ENCODE measurements at regions of chr17 and their contacts with region 1.

Region 1: GRCh38 chr17:80035943-80036714 is at the start of gene CCDC40:
- DNase-seq: peak; percentile 93
- ATAC-seq: peak; percentile 87
- H3K4me3 ChIP-seq: peak within 1 kb of the TSS; percentile 43 to 80 (median 71)
- H3K4me3 Mint-ChIP-seq: peak within 1 kb of the TSS; percentile 87
- H3K27ac ChIP-seq: peak within 1 kb of the TSS; percentile 73 to 83
- H3K27ac Mint-ChIP-seq: peak within 1 kb of the TSS; percentile 89
- H3K4me1 ChIP-seq: peaks cover 15 to 22% of the 10 kb centered on the region in 2 donors
- H3K4me1 Mint-ChIP-seq: peaks cover 11% of the 10 kb centered on the region
- H3K27me3 ChIP-seq: peaks cover 0 to 14% (median 1%) of the 10 kb centered on the region in 4 experiments
- H3K27me3 Mint-ChIP-seq: peaks cover 10% of the 10 kb centered on the region
- CTCF ChIP-seq: no peak
- total RNA-seq, gene CCDC40: 1.9 and 3.2 TPM in 2 replicates

Region 2: GRCh38 chr17:79997011-79997660 is 39.0 kb before region 1 on chr17:
- CTCF ChIA-PET with region 1: no interaction called
- POLR2A ChIA-PET with region 1: interaction called, 5 read pairs
- intact Hi-C with region 1: loop called (anchors 1 kb)
- DNase-seq: peak; percentile 90
- ATAC-seq: peak; percentile 98
- H3K4me3 ChIP-seq: peak overlapping the region; percentile 1 to 45 (median 19)
- H3K4me3 Mint-ChIP-seq: peak overlapping the region; percentile 80
- H3K27ac ChIP-seq: peak overlapping the region; percentile 71 to 81
- H3K27ac Mint-ChIP-seq: peak overlapping the region; percentile 95
- H3K4me1 ChIP-seq: peaks cover 32 to 40% of the 10 kb centered on the region in 2 donors
- H3K4me1 Mint-ChIP-seq: peaks cover 41% of the 10 kb centered on the region
- H3K27me3 ChIP-seq: peaks cover 0 to 11% (median 0%) of the 10 kb centered on the region in 4 experiments
- H3K27me3 Mint-ChIP-seq: peaks cover 5% of the 10 kb centered on the region
- CTCF ChIP-seq: no peak